Activated CD4-positive, alpha-beta T cell treated with anti-CD3 and anti-CD28 coated beads, Interleukin-2, amount 10 ng/mL, durations not matched to agents 24 days and 14 days (primary cell): ENCODE measurements at regions of chr5 and their contacts with region 1.

Region 1: GRCh38 chr5:33440482-33441240 is at the start of gene TARS1:
- DNase-seq: peak; percentile 98
- H3K4me3 Mint-ChIP-seq: no peak within 1 kb of the TSS
- H3K27ac Mint-ChIP-seq: no peak within 1 kb of the TSS
- H3K4me1 Mint-ChIP-seq: peaks cover 27% of the 10 kb centered on the region
- H3K27me3 Mint-ChIP-seq: no peaks in the 10 kb centered on the region
- total RNA-seq, gene TARS1: 190 and 195 TPM in 2 replicates

Region 2: GRCh38 chr5:31531888-31532710 is 1908.6 kb before region 1 on chr5 and contains the starts of genes C5orf22 and DROSHA:
- intact Hi-C with region 1: loop called (anchors 2 kb)
- DNase-seq: peak; percentile 98
- H3K4me3 Mint-ChIP-seq: peak within 1 kb of the TSS; percentile 91
- H3K27ac Mint-ChIP-seq: peak within 1 kb of the TSS; percentile 96
- H3K4me1 Mint-ChIP-seq: peaks cover 27% of the 10 kb centered on the region
- H3K27me3 Mint-ChIP-seq: no peaks in the 10 kb centered on the region
- total RNA-seq, gene C5orf22: 34.2 and 37.7 TPM in 2 replicates
- total RNA-seq, gene DROSHA: 86.5 and 88.7 TPM in 2 replicates

Region 3: DNA sequence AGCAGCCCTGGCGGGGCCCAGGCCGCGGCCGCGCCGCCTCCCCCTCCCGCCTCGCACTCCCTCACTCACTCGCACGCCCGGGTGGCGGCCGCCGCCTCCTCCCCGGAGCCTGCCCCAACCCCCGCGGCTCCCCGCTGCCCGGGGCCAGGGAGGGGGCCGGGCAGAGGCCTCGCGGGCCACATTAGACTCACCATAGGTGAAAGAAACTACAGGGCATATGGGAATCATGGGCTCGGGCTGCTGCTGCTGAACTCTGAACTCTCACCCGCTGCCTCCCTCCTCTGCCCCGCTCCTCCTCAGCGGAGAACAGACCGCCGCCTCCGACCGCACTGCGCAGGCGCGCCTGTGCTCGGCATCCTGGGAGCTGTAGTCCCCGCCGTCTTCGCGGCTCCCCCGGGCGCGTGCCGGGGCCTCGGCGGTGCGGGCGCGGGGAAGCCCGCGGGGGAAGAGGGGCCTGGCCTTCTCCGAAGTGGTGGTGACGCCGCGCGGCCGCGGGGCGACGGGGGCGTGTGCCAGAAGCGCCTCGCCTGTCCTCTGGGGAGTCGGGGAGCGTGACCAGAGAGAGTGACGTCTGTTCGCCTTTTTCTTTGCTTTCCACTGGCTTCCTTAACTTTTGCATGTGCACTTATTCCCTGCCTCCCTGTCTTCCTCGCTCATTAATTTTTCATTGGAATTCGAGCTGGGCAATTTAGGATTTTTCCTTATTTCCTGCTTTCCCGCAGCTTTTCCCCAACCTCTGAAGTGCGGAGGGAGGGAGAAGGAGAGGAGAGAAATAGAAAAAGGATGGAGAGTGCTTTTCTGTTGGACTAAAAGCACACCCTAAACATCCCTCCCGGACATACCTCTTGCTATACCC is 996.0 kb before region 1 on chr5 and contains the start of gene ZFR:
- intact Hi-C with region 1: loop called (anchors 5 kb)
- DNase-seq: peak; percentile 98
- H3K4me3 Mint-ChIP-seq: peak within 1 kb of the TSS; percentile 98
- H3K27ac Mint-ChIP-seq: peak within 1 kb of the TSS; percentile 98
- H3K4me1 Mint-ChIP-seq: peaks cover 29% of the 10 kb centered on the region
- H3K27me3 Mint-ChIP-seq: peaks cover 11% of the 10 kb centered on the region
- total RNA-seq, gene ZFR: 68.1 and 70.4 TPM in 2 replicates

Region 4: GRCh38 chr5:33470544-33470943 is 29.9 kb after region 1 on chr5:
- intact Hi-C with region 1: no loop called
- DNase-seq: no peak
- H3K4me3 Mint-ChIP-seq: no peak overlapping the region
- H3K27ac Mint-ChIP-seq: no peak overlapping the region
- H3K4me1 Mint-ChIP-seq: peaks cover 2% of the 10 kb centered on the region
- H3K27me3 Mint-ChIP-seq: no peaks in the 10 kb centered on the region

Region 5: GRCh38 chr5:33850100-33850594 is 409.5 kb after region 1 on chr5:
- intact Hi-C with region 1: loop called (anchors 10 kb)
- DNase-seq: peak; percentile 75
- H3K4me3 Mint-ChIP-seq: peak overlapping the region; percentile 46
- H3K27ac Mint-ChIP-seq: peak overlapping the region; percentile 45
- H3K4me1 Mint-ChIP-seq: peaks cover 9% of the 10 kb centered on the region
- H3K27me3 Mint-ChIP-seq: peaks cover 29% of the 10 kb centered on the region

Region 6: DNA sequence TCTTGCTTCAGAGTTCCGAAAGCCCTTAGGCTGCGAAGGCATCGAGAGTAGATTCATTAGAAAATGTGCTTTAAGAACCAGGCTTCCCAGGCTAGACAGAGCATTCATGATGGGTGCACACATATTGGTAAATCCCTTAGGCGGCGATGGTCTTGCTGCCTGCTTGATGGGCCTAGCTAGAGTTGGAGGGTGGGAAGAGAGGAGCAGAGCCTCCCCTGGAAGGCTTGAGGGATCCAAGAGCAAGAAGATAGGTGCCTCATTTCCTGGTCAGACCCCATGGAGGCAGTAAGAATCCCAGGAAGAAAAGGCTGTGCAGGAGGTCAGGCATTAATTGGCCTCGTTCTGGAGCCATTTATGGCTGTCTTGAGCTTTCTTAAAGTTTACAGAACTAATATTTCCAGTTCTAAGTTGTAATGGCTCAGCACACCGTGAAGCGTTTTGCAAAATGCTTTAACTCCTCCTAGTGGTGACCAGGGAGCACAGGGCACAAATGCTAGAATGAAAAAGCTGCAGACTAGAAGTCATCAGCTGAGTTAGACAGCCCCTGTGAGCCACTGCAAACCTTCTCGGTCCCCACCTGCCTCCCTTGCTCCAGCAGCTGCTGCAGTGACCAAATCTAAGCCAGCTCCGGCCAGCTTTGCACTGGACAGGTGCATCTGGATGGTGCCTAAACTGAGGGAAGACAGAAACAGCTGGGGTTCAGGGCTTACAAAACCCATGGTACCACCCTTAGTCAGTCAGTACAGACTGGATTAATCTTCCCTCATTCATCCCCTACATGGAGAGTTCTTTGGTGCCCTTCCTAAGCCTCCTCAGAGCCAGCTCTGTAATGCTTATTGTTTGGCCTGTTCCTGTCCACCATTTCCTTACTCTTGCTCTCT is 529.2 kb after region 1 on chr5:
- intact Hi-C with region 1: loop called (anchors 10 kb)
- DNase-seq: peak; percentile 71
- H3K4me3 Mint-ChIP-seq: no peak overlapping the region
- H3K27ac Mint-ChIP-seq: no peak overlapping the region
- H3K4me1 Mint-ChIP-seq: peaks cover 13% of the 10 kb centered on the region
- H3K27me3 Mint-ChIP-seq: peaks cover 6% of the 10 kb centered on the region

Region 7: DNA sequence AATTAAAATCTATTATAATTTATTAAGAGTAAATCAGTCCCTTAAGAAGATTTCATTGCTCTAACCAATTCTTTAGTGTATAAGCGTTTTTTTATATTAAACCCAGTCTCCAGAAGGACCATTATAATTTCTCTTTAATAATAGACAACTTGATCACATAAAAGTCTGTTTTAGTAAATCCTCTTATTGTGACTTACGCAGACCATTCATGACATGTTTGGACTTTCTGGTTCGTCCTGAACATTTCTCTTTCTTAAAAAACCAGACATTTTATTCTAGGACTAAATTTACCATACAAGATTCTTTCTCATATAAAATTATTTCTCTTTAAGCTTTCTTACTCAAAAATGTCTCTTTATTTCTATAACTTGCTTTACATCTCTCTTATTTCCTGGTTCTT is 1019.2 kb after region 1 on chr5:
- intact Hi-C with region 1: loop called (anchors 10 kb)
- DNase-seq: no peak
- H3K4me3 Mint-ChIP-seq: no peak overlapping the region
- H3K27ac Mint-ChIP-seq: no peak overlapping the region
- H3K4me1 Mint-ChIP-seq: peaks cover 1% of the 10 kb centered on the region
- H3K27me3 Mint-ChIP-seq: peaks cover 4% of the 10 kb centered on the region